Naive thymus-derived CD4-positive, alpha-beta T cell (primary cell): ENCODE measurements at regions of chr3 and their contacts with region 1.

Region 1: DNA sequence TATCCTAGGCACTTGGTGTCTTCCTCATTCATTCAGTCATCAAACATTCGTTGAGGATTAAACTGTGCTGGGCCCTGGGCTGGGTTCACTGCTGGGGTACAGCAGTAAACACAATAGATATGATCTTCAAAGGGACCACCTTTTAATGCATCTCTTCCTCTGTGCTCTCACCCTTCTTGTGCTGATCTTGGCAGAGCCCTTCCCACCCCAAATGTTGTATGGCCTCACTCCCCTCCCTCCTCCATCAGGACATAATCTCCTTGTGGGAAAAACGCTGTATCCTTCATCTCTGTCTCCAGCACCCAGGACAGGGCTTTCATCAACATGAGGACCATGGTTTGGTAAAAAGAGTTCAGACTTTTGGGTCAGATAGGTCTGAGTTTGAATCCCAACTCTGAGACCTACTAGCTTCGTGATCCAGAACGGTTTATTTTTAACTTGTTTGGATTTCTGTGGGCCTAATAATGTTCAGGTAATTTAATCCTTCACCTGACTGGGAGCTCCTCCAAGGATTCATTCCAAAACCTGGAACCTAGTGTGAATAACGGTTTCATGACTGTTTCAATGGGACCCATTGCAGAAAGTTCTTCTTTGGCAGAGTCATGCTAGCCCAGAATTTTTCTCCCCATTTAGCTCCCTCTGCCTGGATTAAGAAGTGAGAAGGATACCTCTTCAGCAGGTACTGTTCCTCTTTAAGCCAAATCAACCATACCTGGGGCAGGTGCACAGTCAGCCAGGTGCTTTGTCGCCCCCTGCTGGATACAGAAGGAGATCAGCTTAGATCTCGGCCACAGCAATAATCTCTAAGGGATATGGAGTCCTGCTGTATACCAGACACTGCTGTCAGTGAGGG is 5.2 kb upstream of the WNT7A start:
- DNase-seq: peak; percentile 42 to 83 (median 74)
- ATAC-seq: peak; percentile 84
- H3K4me3 ChIP-seq: no peak overlapping the region
- H3K4me3 Mint-ChIP-seq: peak overlapping the region in 1 of 10 donors; percentile 71
- H3K27ac ChIP-seq: no peak overlapping the region
- H3K27ac Mint-ChIP-seq: peak overlapping the region in 4 of 9 donors; percentile 9 to 86 (median 40)
- H3K4me1 ChIP-seq: peaks cover 9 to 10% of the 10 kb centered on the region in 2 donors
- H3K4me1 Mint-ChIP-seq: peaks cover 2 to 23% (median 17%) of the 10 kb centered on the region in 7 donors
- H3K27me3 ChIP-seq: peaks cover 0 to 6% of the 10 kb centered on the region in 2 donors
- H3K27me3 Mint-ChIP-seq: peaks cover 0 to 42% (median 21%) of the 10 kb centered on the region in 5 donors

Region 2: GRCh38 chr3:13495921-13496723 is 389.0 kb before region 1 on chr3:
- CTCF ChIA-PET with region 1: interaction called, 10 read pairs
- POLR2A ChIA-PET with region 1: no interaction called
- intact Hi-C with region 1: loop called (anchors 1 to 2 kb)
- DNase-seq: peak; percentile 47 to 73 (median 66)
- ATAC-seq: peak; percentile 89
- H3K4me3 ChIP-seq: no peak overlapping the region
- H3K4me3 Mint-ChIP-seq: no peak overlapping the region
- H3K27ac ChIP-seq: no peak overlapping the region
- H3K27ac Mint-ChIP-seq: no peak overlapping the region
- H3K4me1 ChIP-seq: no peaks in the 10 kb centered on the region
- H3K4me1 Mint-ChIP-seq: peaks cover 0 to 7% (median 3%) of the 10 kb centered on the region in 7 donors
- H3K27me3 ChIP-seq: no peaks in the 10 kb centered on the region
- H3K27me3 Mint-ChIP-seq: no peaks in the 10 kb centered on the region

Region 3: DNA sequence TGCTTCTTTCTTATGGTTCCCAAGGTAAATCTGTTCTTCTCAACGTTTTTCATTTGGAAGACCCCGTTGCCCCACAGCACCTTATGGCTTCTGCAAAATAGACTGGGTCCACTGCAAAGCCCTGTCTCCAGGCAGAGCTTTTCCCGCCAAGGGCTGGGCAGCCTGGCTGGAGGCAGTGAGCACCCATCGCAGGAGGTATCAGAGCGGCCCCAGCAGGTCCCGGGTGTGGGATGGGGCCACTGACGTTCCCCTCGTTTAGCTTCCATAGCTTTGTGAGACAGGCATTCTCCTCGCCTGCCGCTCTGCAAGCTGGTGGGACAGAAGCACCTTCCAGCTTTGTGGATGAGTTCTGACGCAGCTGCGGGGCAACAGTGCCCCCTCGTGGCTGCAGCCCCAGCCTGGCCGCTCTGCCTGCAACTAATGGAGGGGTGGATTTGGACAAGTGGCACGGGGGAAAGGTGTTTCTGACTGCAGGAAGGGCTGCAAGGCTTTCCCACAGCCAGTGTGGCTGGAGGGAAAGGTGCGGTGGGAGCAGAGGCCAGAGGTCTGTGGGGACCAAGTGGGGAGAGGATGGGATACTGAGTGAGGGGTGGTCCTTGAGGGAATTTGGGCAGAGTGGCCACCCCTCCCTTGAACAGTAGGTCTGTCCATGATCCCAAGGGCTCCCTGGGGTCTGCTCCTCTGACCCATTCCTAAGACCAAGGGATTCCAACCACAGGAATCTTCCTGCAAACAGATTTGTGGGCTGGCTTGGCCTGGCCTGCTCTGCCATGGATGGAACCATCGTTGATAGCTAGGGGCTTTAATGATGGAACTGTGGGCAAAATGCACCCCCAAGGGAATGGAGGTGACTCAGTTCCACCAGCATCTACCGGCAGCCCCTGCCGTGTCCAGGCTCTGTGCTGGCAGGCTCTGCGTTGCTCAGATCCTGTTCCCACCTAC is 236.7 kb before region 1 on chr3:
- CTCF ChIA-PET with region 1: interaction called, 522 read pairs
- POLR2A ChIA-PET with region 1: interaction called, 3 read pairs
- intact Hi-C with region 1: no loop called
- DNase-seq: peak; percentile 50 to 82 (median 72)
- ATAC-seq: peak; percentile 62
- H3K4me3 ChIP-seq: no peak overlapping the region
- H3K4me3 Mint-ChIP-seq: peak overlapping the region in 7 of 10 donors; percentile 17 to 64 (median 41)
- H3K27ac ChIP-seq: no peak overlapping the region
- H3K27ac Mint-ChIP-seq: peak overlapping the region in 2 of 9 donors; percentile 57 to 87
- H3K4me1 ChIP-seq: peaks cover 9 to 12% of the 10 kb centered on the region in 2 donors
- H3K4me1 Mint-ChIP-seq: peaks cover 14 to 40% (median 23%) of the 10 kb centered on the region in 7 donors
- H3K27me3 ChIP-seq: no peaks in the 10 kb centered on the region
- H3K27me3 Mint-ChIP-seq: peaks cover 15 to 48% (median 20%) of the 10 kb centered on the region in 5 donors

Region 4: DNA sequence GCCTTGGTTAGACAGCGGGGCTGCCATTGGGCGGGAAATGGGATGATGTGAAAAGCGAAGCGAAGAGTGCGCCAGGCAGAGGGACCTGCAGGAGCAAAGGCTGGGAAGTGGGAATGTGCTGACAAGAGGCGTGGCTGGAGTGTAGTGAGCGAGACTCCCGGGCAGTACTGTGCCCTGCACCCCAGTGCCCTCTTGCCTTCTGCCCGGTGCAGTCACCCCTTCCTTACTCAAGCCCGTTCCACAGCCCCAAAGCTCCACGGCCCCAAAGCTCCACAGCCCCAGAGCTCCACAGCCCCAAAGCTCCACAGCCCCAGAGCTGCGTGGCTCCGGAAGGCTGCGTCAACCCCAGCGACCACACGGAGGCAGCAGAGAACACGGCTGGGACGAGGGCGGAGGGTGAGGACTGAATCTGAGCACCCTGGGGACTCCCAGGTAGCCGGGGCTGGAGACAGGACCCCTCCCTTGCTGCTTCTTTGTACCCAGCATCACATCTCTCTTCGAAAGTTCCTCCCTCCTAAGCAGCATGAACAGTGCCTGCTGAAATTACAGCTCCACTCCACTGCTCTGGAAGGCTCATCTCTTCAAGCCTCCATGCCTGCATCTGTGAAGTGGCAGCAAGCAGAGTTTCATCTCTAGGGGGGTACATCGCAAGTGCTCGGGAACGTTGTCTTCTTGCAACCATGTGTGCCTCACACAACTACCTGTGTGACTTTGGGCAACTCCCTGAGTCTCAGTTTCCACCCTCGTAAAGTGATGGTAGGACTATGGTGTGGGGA is 227.2 kb before region 1 on chr3:
- CTCF ChIA-PET with region 1: interaction called, 522 read pairs
- POLR2A ChIA-PET with region 1: interaction called, 79 read pairs
- intact Hi-C with region 1: loop called (anchors 1 kb)
- DNase-seq: peak; percentile 47 to 77 (median 70)
- ATAC-seq: peak; percentile 88
- H3K4me3 ChIP-seq: no peak overlapping the region
- H3K4me3 Mint-ChIP-seq: peak overlapping the region in 2 of 10 donors; percentile 34 to 51
- H3K27ac ChIP-seq: no peak overlapping the region
- H3K27ac Mint-ChIP-seq: no peak overlapping the region
- H3K4me1 ChIP-seq: peaks cover 0 to 19% of the 10 kb centered on the region in 2 donors
- H3K4me1 Mint-ChIP-seq: peaks cover 2 to 34% (median 30%) of the 10 kb centered on the region in 7 donors
- H3K27me3 ChIP-seq: no peaks in the 10 kb centered on the region
- H3K27me3 Mint-ChIP-seq: peaks cover 0 to 39% (median 8%) of the 10 kb centered on the region in 5 donors

Region 5: GRCh38 chr3:13782501-13782900 is 102.6 kb before region 1 on chr3:
- CTCF ChIA-PET with region 1: no interaction called
- POLR2A ChIA-PET with region 1: no interaction called
- intact Hi-C with region 1: no loop called
- DNase-seq: no peak
- ATAC-seq: no peak
- H3K4me3 ChIP-seq: no peak overlapping the region
- H3K4me3 Mint-ChIP-seq: no peak overlapping the region
- H3K27ac ChIP-seq: no peak overlapping the region
- H3K27ac Mint-ChIP-seq: no peak overlapping the region
- H3K4me1 ChIP-seq: no peaks in the 10 kb centered on the region
- H3K4me1 Mint-ChIP-seq: peaks cover 0 to 9% (median 5%) of the 10 kb centered on the region in 7 donors
- H3K27me3 ChIP-seq: no peaks in the 10 kb centered on the region
- H3K27me3 Mint-ChIP-seq: peaks cover 0 to 15% (median 5%) of the 10 kb centered on the region in 5 donors

Region 6: GRCh38 chr3:13822042-13822441 is 63.0 kb before region 1 on chr3:
- CTCF ChIA-PET with region 1: interaction called, 14 read pairs
- POLR2A ChIA-PET with region 1: interaction called, 3 read pairs
- intact Hi-C with region 1: loop called in 1 of 2 experiments (anchors 1 kb)
- DNase-seq: no peak
- ATAC-seq: no peak
- H3K4me3 ChIP-seq: no peak overlapping the region
- H3K4me3 Mint-ChIP-seq: no peak overlapping the region
- H3K27ac ChIP-seq: no peak overlapping the region
- H3K27ac Mint-ChIP-seq: peak overlapping the region in 3 of 9 donors; percentile 26 to 70 (median 57)
- H3K4me1 ChIP-seq: no peaks in the 10 kb centered on the region
- H3K4me1 Mint-ChIP-seq: peaks cover 0 to 26% (median 9%) of the 10 kb centered on the region in 7 donors
- H3K27me3 ChIP-seq: no peaks in the 10 kb centered on the region
- H3K27me3 Mint-ChIP-seq: peaks cover 0 to 3% (median 0%) of the 10 kb centered on the region in 5 donors

Region 7: DNA sequence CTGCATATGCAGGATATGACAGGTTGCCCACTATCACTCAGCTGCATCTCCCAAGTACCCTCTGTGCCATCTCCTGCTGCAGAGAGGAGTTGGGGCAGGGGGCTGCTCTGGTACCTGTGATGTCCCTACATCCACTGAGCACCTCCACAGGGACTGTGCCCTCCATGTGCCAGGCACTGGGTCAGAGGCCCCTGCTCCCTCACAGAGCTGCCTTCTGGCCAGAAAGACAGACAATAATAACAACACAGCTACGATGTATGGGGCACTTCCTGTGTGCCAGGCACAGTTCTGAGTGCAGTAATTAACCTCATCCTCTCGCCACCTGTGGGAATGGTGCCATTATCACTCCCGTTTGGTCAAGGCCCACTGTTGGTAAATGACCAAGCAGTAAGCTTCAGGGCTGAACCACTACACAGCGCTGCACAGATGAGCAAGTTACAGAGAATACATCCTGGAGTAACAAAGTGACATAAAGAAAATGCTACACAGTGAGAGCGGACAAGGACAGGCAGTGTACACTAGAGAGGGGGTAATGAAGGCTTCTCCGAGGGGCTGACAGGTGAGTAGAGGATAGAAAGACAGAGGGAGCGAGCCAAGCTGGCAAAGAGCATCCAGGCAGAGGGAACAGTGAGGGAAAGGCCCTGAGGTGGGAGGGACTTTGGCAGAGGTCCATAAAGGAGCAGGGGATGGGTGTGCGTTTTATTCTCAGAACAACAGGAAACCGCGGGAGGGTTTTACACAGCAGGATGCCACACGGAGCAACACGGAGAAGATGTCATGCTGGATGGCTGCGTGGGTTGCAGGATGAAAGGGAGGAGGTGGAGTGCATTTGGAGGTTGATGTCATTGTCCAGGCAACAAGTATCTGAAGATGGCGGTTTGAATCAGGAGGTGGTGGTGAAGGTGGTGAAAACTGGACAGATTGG is 18.8 kb before region 1 on chr3:
- CTCF ChIA-PET with region 1: interaction called, 41 read pairs
- POLR2A ChIA-PET with region 1: interaction called, 71 read pairs
- intact Hi-C with region 1: loop called in 1 of 2 experiments (anchors 1 kb)
- DNase-seq: peak; percentile 28 to 92 (median 86)
- ATAC-seq: peak; percentile 93
- H3K4me3 ChIP-seq: peak overlapping the region; percentile 26
- H3K4me3 Mint-ChIP-seq: peak overlapping the region; percentile 74 to 86 (median 78)
- H3K27ac ChIP-seq: peak overlapping the region; percentile 92
- H3K27ac Mint-ChIP-seq: peak overlapping the region; percentile 94 to 99 (median 97)
- H3K4me1 ChIP-seq: peaks cover 21 to 61% of the 10 kb centered on the region in 2 donors
- H3K4me1 Mint-ChIP-seq: peaks cover 44 to 87% (median 74%) of the 10 kb centered on the region in 7 donors
- H3K27me3 ChIP-seq: no peaks in the 10 kb centered on the region
- H3K27me3 Mint-ChIP-seq: peaks cover 0 to 8% (median 0%) of the 10 kb centered on the region in 5 donors

Region 8: GRCh38 chr3:13872451-13872850 is 12.6 kb before region 1 on chr3:
- CTCF ChIA-PET with region 1: interaction called, 41 read pairs
- POLR2A ChIA-PET with region 1: interaction called, 71 read pairs
- intact Hi-C with region 1: no loop called
- DNase-seq: no peak
- ATAC-seq: peak; percentile 30
- H3K4me3 ChIP-seq: no peak overlapping the region
- H3K4me3 Mint-ChIP-seq: no peak overlapping the region
- H3K27ac ChIP-seq: no peak overlapping the region
- H3K27ac Mint-ChIP-seq: peak overlapping the region in 5 of 9 donors; percentile 15 to 97 (median 68)
- H3K4me1 ChIP-seq: peaks cover 5 to 19% of the 10 kb centered on the region in 2 donors
- H3K4me1 Mint-ChIP-seq: peaks cover 16 to 75% (median 51%) of the 10 kb centered on the region in 7 donors
- H3K27me3 ChIP-seq: no peaks in the 10 kb centered on the region
- H3K27me3 Mint-ChIP-seq: peaks cover 0 to 39% (median 5%) of the 10 kb centered on the region in 5 donors